Activated CD4-positive, alpha-beta T cell treated with anti-CD3 and anti-CD28 coated beads for 36 hours (primary cell): ENCODE measurements at regions of chr13 and their contacts with region 1.

Region 1: DNA sequence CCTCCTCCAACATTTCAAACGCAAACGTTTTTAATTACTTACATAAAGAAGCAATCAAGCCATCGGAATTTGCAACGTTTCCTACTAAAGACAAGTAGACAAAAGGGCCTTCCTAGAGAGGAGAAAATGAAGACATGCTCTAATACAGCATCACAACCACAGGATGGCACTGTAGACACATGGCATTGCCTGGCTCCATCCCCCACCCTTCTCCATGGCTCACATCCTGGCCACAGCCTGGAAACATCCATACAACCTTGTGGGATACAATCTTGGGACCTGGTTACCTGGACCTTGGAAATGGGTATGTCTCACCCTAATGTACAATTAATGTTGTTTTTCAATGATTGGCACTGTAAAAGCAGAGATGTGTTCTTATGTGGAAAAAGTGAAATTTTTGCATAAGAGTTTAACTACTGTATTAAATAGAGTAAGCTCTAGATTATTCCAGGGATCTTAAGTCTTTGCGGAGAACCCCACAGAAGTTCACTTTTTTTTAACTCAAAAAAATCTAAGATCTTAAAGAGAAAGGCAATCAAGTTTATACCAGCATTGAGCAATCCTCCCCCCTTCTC is 21.5 kb downstream of the EBPL start:
- DNase-seq: peak; percentile 54
- ATAC-seq: peak; percentile 72
- H3K4me3 Mint-ChIP-seq: no peak overlapping the region
- H3K27ac Mint-ChIP-seq: no peak overlapping the region
- H3K4me1 Mint-ChIP-seq: no peaks in the 10 kb centered on the region
- H3K27me3 Mint-ChIP-seq: no peaks in the 10 kb centered on the region

Region 2: DNA sequence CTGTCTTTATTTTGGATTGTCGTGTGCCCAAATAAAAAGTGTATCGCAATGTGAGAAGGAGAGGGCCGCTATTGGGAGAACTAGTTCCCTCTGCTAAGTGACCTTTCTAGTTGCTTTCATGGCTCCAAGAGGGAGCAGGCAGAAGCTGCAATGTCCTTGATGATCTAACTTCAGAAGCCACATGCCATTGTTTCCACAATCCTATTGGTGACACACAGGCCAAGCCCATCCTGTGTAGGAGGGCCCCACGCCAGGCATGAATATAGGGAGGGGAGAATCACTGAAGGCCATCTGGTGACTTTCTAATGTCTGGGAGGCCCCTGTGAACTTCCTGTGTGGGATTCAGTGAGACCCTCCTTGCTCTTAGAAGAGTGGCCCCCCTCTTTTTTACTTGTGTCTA is 170.4 kb after region 1 on chr13:
- CTCF ChIA-PET with region 1: no interaction called
- POLR2A ChIA-PET with region 1: no interaction called
- intact Hi-C with region 1: loop called in 1 of 2 experiments (anchors 5 kb)
- DNase-seq: no peak
- ATAC-seq: no peak
- H3K4me3 Mint-ChIP-seq: no peak overlapping the region
- H3K27ac Mint-ChIP-seq: no peak overlapping the region
- H3K4me1 Mint-ChIP-seq: no peaks in the 10 kb centered on the region
- H3K27me3 Mint-ChIP-seq: no peaks in the 10 kb centered on the region